B cell (primary cell): ENCODE measurements at regions of chr15 and their contacts with region 1.

Region 1: GRCh38 chr15:41283653-41284426 is 48.6 kb downstream of the OIP5 start:
- DNase-seq: peak; percentile 99
- ATAC-seq: peak; percentile 98
- H3K4me3 ChIP-seq: peak overlapping the region; percentile 86 to 97 (median 94)
- H3K4me3 Mint-ChIP-seq: peak overlapping the region; percentile 95
- H3K27ac ChIP-seq: peak overlapping the region; percentile 86 to 90
- H3K27ac Mint-ChIP-seq: peak overlapping the region; percentile 97
- H3K4me1 ChIP-seq: peaks cover 16 to 33% of the 10 kb centered on the region in 2 donors
- H3K4me1 Mint-ChIP-seq: peaks cover 42% of the 10 kb centered on the region
- H3K27me3 ChIP-seq: no peaks in the 10 kb centered on the region
- H3K27me3 Mint-ChIP-seq: no peaks in the 10 kb centered on the region
- CTCF ChIP-seq: no peak

Region 2: GRCh38 chr15:40382580-40383456 is 901.0 kb before region 1 on chr15 and contains the start of gene KNSTRN:
- CTCF ChIA-PET with region 1: no interaction called
- POLR2A ChIA-PET with region 1: no interaction called
- intact Hi-C with region 1: loop called (anchors 5 kb)
- DNase-seq: peak; percentile 93
- ATAC-seq: peak; percentile 100
- H3K4me3 ChIP-seq: peak within 1 kb of the TSS; percentile 53 to 89 (median 84)
- H3K4me3 Mint-ChIP-seq: peak within 1 kb of the TSS; percentile 98
- H3K27ac ChIP-seq: peak within 1 kb of the TSS in 1 of 2 donors; percentile 40
- H3K27ac Mint-ChIP-seq: peak within 1 kb of the TSS; percentile 82
- H3K4me1 ChIP-seq: peaks cover 6 to 13% of the 10 kb centered on the region in 2 donors
- H3K4me1 Mint-ChIP-seq: peaks cover 12% of the 10 kb centered on the region
- H3K27me3 ChIP-seq: no peaks in the 10 kb centered on the region
- H3K27me3 Mint-ChIP-seq: no peaks in the 10 kb centered on the region
- CTCF ChIP-seq: no peak
- total RNA-seq, gene KNSTRN: 12.6 and 14.0 TPM in 2 replicates

Region 3: DNA sequence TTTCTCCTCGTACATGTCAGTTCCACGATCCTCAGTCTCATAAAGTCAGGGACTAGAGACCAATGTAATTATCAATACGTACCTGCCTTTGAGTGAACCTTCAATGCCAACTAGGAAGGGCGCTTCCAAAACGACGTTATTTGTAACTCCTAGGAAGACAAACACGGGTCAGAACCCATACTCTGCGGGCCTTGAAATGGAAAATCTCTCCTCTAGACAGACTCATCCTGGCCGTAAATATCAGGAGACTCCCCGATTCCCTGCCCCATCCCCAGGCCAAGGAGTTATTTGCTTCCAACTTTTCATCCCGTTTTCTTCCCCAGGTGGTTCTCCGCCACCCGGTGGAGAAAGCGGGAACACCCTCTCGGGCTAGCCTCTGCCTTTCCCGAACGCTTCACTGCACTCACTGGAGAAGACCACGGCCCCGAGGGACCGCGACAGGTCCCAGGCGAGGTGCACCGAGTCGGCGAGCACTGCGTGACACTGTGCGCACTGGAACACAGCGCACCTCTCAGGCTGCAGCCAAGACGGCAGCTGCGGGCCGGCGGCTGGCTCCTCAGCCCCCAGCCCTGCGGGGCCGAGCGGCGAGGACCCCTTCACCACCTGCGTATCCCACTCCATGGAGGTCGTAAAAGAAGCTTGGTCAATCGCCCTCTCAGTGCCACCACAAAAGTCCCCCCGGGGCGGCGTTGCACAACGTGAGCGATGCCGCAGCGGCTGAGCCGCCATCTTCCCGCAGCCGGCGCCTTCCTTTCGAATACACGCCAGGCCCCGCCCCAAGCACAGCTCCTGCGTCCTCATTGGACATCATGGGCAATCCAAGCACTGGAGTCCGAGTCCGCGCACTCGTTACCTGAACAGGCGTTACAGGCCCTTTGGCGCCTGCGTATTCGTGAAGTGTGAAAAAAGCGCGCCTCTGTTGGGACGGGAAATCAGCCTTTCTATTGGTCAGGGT is 48.3 kb after region 1 on chr15 and contains the start of gene OIP5:
- CTCF ChIA-PET with region 1: interaction called, 5 read pairs
- POLR2A ChIA-PET with region 1: interaction called, 4 read pairs
- intact Hi-C with region 1: loop called (anchors 1 kb)
- DNase-seq: peak; percentile 98
- ATAC-seq: peak; percentile 94
- H3K4me3 ChIP-seq: peak within 1 kb of the TSS; percentile 84 to 98 (median 89)
- H3K4me3 Mint-ChIP-seq: peak within 1 kb of the TSS; percentile 99
- H3K27ac ChIP-seq: peak within 1 kb of the TSS; percentile 45 to 76
- H3K27ac Mint-ChIP-seq: peak within 1 kb of the TSS; percentile 95
- H3K4me1 ChIP-seq: peaks cover 13 to 19% of the 10 kb centered on the region in 2 donors
- H3K4me1 Mint-ChIP-seq: peaks cover 27% of the 10 kb centered on the region
- H3K27me3 ChIP-seq: no peaks in the 10 kb centered on the region
- H3K27me3 Mint-ChIP-seq: no peaks in the 10 kb centered on the region
- CTCF ChIP-seq: peak; percentile 57
- total RNA-seq, gene OIP5: 0.84 and 2.3 TPM in 2 replicates

Region 4: GRCh38 chr15:41401904-41402267 is 118.0 kb after region 1 on chr15:
- CTCF ChIA-PET with region 1: no interaction called
- POLR2A ChIA-PET with region 1: interaction called, 3 read pairs
- intact Hi-C with region 1: loop called (anchors 5 kb)
- DNase-seq: no peak
- ATAC-seq: peak; percentile 8
- H3K4me3 ChIP-seq: peak overlapping the region; percentile 76 to 97 (median 86)
- H3K4me3 Mint-ChIP-seq: peak overlapping the region; percentile 98
- H3K27ac ChIP-seq: peak overlapping the region; percentile 71 to 91
- H3K27ac Mint-ChIP-seq: peak overlapping the region; percentile 99
- H3K4me1 ChIP-seq: peaks cover 8 to 17% of the 10 kb centered on the region in 2 donors
- H3K4me1 Mint-ChIP-seq: peaks cover 21% of the 10 kb centered on the region
- H3K27me3 ChIP-seq: no peaks in the 10 kb centered on the region
- H3K27me3 Mint-ChIP-seq: no peaks in the 10 kb centered on the region
- CTCF ChIP-seq: no peak

Region 5: GRCh38 chr15:41585127-41586047 is 301.5 kb after region 1 on chr15:
- CTCF ChIA-PET with region 1: no interaction called
- POLR2A ChIA-PET with region 1: no interaction called
- intact Hi-C with region 1: no loop called
- DNase-seq: peak; percentile 59
- ATAC-seq: peak; percentile 53
- H3K4me3 ChIP-seq: peak overlapping the region; percentile 28 to 62 (median 38)
- H3K4me3 Mint-ChIP-seq: peak overlapping the region; percentile 86
- H3K27ac ChIP-seq: no peak overlapping the region
- H3K27ac Mint-ChIP-seq: peak overlapping the region; percentile 53
- H3K4me1 ChIP-seq: peaks cover 9 to 10% of the 10 kb centered on the region in 2 donors
- H3K4me1 Mint-ChIP-seq: peaks cover 6% of the 10 kb centered on the region
- H3K27me3 ChIP-seq: peaks cover 0 to 22% (median 10%) of the 10 kb centered on the region in 4 experiments
- H3K27me3 Mint-ChIP-seq: peaks cover 50% of the 10 kb centered on the region
- CTCF ChIP-seq: peak; percentile 34